ENCODE measurements at regions of chr3 and their contacts with region 1.

Region 1: DNA sequence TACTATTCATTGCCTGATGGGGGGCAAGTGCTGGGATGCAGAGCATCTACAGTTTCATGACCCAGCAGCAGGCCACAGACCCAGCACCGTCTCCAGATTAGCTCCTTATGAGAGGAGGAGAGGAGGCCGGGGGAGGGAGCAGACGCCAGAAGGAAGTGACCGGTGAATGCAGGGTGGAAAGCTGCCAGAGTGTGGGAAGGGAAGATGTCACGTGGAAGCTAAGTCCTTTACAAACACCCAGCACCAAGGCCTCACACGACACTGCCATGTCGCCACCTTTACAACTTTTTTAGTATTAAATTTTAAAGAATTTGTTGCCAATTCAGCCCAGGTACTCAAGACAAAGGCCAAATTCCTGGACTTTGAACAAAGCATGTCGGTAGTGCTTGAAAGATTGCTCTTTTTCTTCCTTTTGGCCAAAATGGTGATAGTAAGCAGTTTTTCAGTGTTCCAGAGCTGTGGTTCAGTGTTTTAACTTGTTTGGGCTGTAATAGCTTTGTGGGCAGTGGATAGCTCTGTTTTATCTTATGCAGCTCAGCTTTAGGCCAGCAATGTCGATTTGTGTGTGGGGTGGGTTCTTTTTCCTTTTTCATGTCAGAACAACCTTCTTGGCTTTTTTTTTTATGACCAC is 58.2 kb downstream of the ZBTB38 start:
- DNase-seq: peak; percentile 88
- ATAC-seq: peak; percentile 65

Region 2: GRCh38 chr3:141360888-141361598 is 65.5 kb before region 1 on chr3:
- intact Hi-C with region 1: no loop called
- DNase-seq: no peak
- ATAC-seq: peak; percentile 80

Region 3: GRCh38 chr3:141412087-141412935 is 14.2 kb before region 1 on chr3:
- intact Hi-C with region 1: loop called (anchors 2 kb)
- DNase-seq: peak; percentile 75
- ATAC-seq: peak; percentile 66

Region 4: GRCh38 chr3:142447852-142448823 is 1021.6 kb after region 1 on chr3 and contains the start of gene XRN1:
- intact Hi-C with region 1: no loop called
- DNase-seq: peak; percentile 98
- ATAC-seq: peak; percentile 100
- total RNA-seq, gene XRN1: 13.2 TPM

Measured in Right ventricle myocardium inferior (tissue), 1 donor.